Endothelial cell of umbilical vein (primary cell): ENCODE measurements at regions of chr1 and their contacts with region 1.

Region 1: GRCh38 chr1:168082008-168082876 is 54.5 kb downstream of the GPR161 start:
- DNase-seq: peak; percentile 81
- H3K4me3 ChIP-seq: no peak overlapping the region
- H3K27ac ChIP-seq: peak overlapping the region; percentile 23
- H3K4me1 ChIP-seq: peaks cover 5% of the 10 kb centered on the region
- H3K27me3 ChIP-seq: no peaks in the 10 kb centered on the region
- CTCF ChIP-seq: peak; percentile 94 to 96
- POLR2A ChIP-seq: no peak

Region 2: GRCh38 chr1:167721617-167722151 is 360.6 kb before region 1 on chr1 and contains the start of gene MPZL1:
- CTCF ChIA-PET with region 1: interaction called, 29 read pairs
- POLR2A ChIA-PET with region 1: no interaction called
- dilution Hi-C with region 1: no loop called
- intact Hi-C with region 1: loop called (anchors 1 kb)
- DNase-seq: peak; percentile 96
- H3K4me3 ChIP-seq: peak within 1 kb of the TSS; percentile 59 to 97 (median 72)
- H3K27ac ChIP-seq: peak within 1 kb of the TSS; percentile 72
- H3K4me1 ChIP-seq: peaks cover 26% of the 10 kb centered on the region
- H3K27me3 ChIP-seq: no peaks in the 10 kb centered on the region
- CTCF ChIP-seq: no peak
- POLR2A ChIP-seq: peak; percentile 61
- total RNA-seq, gene MPZL1: 99.1 and 99.4 TPM in 2 replicates

Region 3: GRCh38 chr1:167803358-167804207 is 278.7 kb before region 1 on chr1:
- CTCF ChIA-PET with region 1: interaction called, 11 read pairs
- POLR2A ChIA-PET with region 1: no interaction called
- dilution Hi-C with region 1: no loop called
- intact Hi-C with region 1: loop called (anchors 1 kb)
- DNase-seq: peak; percentile 92
- H3K4me3 ChIP-seq: no peak overlapping the region
- H3K27ac ChIP-seq: no peak overlapping the region
- H3K4me1 ChIP-seq: peaks cover 5% of the 10 kb centered on the region
- H3K27me3 ChIP-seq: no peaks in the 10 kb centered on the region
- CTCF ChIP-seq: peak; percentile 96 to 99
- POLR2A ChIP-seq: no peak

Region 4: GRCh38 chr1:167936068-167936929 is 145.9 kb before region 1 on chr1 and contains the start of gene DCAF6:
- CTCF ChIA-PET with region 1: interaction called, 49 read pairs
- POLR2A ChIA-PET with region 1: interaction called, 4 read pairs
- dilution Hi-C with region 1: no loop called
- intact Hi-C with region 1: loop called (anchors 1 kb)
- DNase-seq: peak; percentile 99
- H3K4me3 ChIP-seq: peak within 1 kb of the TSS; percentile 87 to 95 (median 93)
- H3K27ac ChIP-seq: peak within 1 kb of the TSS; percentile 93
- H3K4me1 ChIP-seq: peaks cover 18% of the 10 kb centered on the region
- H3K27me3 ChIP-seq: no peaks in the 10 kb centered on the region
- CTCF ChIP-seq: no peak
- POLR2A ChIP-seq: peak; percentile 89
- total RNA-seq, gene DCAF6: 38.7 and 39.4 TPM in 2 replicates

Region 5: GRCh38 chr1:168097921-168098528 is 15.8 kb after region 1 on chr1:
- CTCF ChIA-PET with region 1: interaction called, 25 read pairs
- POLR2A ChIA-PET with region 1: no interaction called
- dilution Hi-C with region 1: no loop called
- intact Hi-C with region 1: no loop called
- DNase-seq: no peak
- H3K4me3 ChIP-seq: no peak overlapping the region
- H3K27ac ChIP-seq: no peak overlapping the region
- H3K4me1 ChIP-seq: no peaks in the 10 kb centered on the region
- H3K27me3 ChIP-seq: no peaks in the 10 kb centered on the region
- CTCF ChIP-seq: no peak
- POLR2A ChIP-seq: no peak

Region 6: DNA sequence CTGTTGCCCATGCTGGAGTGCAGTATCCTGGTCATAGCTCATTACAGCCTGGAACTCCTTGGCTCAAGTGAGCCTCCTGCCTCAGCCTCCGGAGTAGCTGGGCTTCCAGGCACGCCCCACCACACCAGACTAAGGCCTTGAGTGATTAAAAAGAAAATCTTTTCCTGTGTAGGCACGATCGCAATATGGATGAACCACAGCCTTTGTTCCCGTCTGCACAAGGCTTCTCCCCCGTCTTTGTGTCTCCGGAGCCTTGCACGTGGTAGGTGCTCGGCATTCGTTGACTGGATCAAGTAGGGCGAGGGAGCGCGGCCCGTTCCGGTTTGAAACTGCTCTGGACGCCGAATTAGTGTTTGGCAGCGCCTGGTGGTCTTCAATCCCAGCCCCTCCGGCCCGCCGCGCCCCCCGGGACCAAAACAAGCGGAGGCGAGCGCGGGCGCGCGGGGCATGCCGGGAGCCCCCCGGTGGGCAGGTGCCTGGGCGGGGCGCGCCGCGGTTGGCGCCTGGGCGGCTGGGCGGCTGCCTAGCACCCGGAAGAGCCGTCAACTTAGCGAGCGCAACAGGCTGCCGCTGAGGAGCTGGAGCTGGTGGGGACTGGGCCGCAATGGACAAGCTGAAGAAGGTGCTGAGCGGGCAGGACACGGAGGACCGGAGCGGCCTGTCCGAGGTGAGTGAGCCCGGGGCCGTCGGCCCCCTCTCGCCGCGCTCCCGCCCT is 143.4 kb after region 1 on chr1 and contains the start of gene SFT2D2:
- CTCF ChIA-PET with region 1: interaction called, 5 read pairs
- POLR2A ChIA-PET with region 1: no interaction called
- dilution Hi-C with region 1: no loop called
- intact Hi-C with region 1: loop called (anchors 5 kb)
- DNase-seq: peak; percentile 78
- H3K4me3 ChIP-seq: peak within 1 kb of the TSS; percentile 63 to 88 (median 65)
- H3K27ac ChIP-seq: peak within 1 kb of the TSS; percentile 83
- H3K4me1 ChIP-seq: peaks cover 23% of the 10 kb centered on the region
- H3K27me3 ChIP-seq: peaks cover 6 to 7% of the 10 kb centered on the region in 2 experiments
- CTCF ChIP-seq: no peak
- POLR2A ChIP-seq: peak; percentile 47
- total RNA-seq, gene SFT2D2: 63.8 and 68.1 TPM in 2 replicates

Region 7: GRCh38 chr1:168288311-168289052 is 206.2 kb after region 1 on chr1:
- CTCF ChIA-PET with region 1: no interaction called
- POLR2A ChIA-PET with region 1: no interaction called
- dilution Hi-C with region 1: no loop called
- intact Hi-C with region 1: no loop called
- DNase-seq: no peak
- H3K4me3 ChIP-seq: no peak overlapping the region
- H3K27ac ChIP-seq: no peak overlapping the region
- H3K4me1 ChIP-seq: peaks cover 14% of the 10 kb centered on the region
- H3K27me3 ChIP-seq: no peaks in the 10 kb centered on the region
- CTCF ChIP-seq: no peak
- POLR2A ChIP-seq: no peak